ENCODE measurements at regions of chr9 and their contacts with region 1.

Region 1: DNA sequence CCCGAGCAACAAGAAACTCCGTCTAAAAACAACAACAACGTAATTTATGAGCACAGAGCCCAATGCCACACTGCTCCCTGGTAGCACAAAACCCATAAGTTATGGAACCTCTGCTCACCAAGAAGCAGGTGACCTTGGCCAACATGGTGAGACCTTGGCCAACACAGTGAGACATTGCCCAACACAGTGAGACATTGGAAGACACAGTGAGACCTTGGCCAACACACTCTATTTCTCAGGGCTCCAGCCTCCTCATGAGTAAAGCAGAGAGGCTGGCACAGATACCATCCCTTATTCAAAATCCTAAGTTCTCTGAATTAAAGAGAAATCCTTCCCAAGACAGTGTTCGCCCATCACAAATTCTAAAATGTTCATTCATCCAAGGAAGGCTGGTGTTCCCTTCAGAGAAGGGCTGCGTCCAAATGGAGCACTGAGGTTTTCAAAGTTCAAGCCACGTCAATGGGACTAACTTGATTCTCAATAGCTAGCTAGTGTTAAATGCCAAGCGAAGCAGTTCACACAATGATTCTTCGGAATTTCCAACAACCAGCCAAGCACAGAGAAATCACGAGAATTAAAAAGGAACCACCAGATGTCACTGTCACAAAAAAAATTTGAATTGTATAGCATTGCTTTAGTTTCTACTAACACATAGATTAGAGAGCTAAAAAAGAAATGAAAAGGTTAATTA is 29.5 kb downstream of the TTC39B start:
- DNase-seq: peak; percentile 29
- CTCF ChIP-seq: peak; percentile 36

Region 2: DNA sequence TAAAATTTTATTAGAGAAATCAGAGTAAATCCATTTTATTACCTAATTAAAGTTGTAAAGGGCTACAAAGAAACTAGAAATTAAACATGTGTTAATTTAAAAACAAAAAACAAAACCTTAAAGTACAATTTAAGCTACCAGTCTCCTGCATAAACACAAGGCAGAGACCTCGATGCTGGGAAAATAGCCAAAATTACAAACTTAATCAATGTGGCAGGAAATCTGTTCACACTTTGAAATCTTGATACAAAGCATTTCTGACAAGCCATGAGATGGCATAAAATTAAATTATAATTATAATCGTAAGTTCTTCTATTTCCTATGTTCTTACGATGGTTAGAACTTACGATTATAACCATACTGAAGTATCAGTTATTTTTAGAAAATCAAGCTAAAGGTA is 209.3 kb before region 1 on chr9:
- in situ Hi-C with region 1: no loop called
- DNase-seq: no peak
- CTCF ChIP-seq: no peak

Region 3: GRCh38 chr9:15606643-15607472 is 329.3 kb after region 1 on chr9:
- in situ Hi-C with region 1: loop called (anchors 25 kb)
- DNase-seq: peak; percentile 51
- CTCF ChIP-seq: peak; percentile 59